ENCODE measurements at regions of chr17 and their contacts with region 1.

Region 1: DNA sequence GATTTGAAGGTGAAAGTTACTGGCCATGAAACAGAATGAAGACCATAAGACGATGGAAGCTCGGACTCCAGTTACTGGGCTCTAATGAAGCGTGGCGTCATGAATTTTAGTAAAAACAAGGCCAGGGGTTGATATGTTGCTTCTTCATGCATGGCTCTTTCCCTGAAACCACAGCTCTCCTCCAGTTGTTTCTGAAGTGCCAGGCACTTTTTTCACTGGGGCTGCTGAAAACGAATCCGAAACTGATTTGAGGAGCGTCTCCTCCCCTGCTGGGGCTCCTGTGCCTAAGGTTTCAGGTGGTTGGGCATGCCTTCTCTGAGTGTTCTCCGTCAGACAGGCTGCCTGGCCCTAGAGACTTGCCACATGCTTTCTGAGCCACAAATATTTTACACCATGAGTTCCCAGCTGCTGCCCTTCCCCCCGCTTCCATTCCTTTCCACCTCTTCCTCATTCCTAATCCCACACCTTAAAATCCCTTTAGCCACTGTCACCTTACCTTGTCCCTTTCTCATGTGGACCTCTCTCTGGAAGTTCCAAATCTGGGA is 3.7 kb upstream of the MYL4 start:
- DNase-seq: peak; percentile 71
- H3K4me3 Mint-ChIP-seq: peak overlapping the region; percentile 75
- H3K27ac Mint-ChIP-seq: peak overlapping the region; percentile 84
- H3K4me1 Mint-ChIP-seq: peaks cover 45% of the 10 kb centered on the region
- H3K27me3 Mint-ChIP-seq: no peaks in the 10 kb centered on the region

Region 2: GRCh38 chr17:47145351-47145750 is 60.1 kb before region 1 on chr17:
- intact Hi-C with region 1: no loop called
- DNase-seq: no peak
- H3K4me3 Mint-ChIP-seq: no peak overlapping the region
- H3K27ac Mint-ChIP-seq: no peak overlapping the region
- H3K4me1 Mint-ChIP-seq: no peaks in the 10 kb centered on the region
- H3K27me3 Mint-ChIP-seq: no peaks in the 10 kb centered on the region

Region 3: GRCh38 chr17:47162013-47162622 is 43.4 kb before region 1 on chr17:
- intact Hi-C with region 1: loop called (anchors 5 kb)
- DNase-seq: no peak
- H3K4me3 Mint-ChIP-seq: peak overlapping the region; percentile 24
- H3K27ac Mint-ChIP-seq: peak overlapping the region; percentile 13
- H3K4me1 Mint-ChIP-seq: peaks cover 26% of the 10 kb centered on the region
- H3K27me3 Mint-ChIP-seq: no peaks in the 10 kb centered on the region

Region 4: DNA sequence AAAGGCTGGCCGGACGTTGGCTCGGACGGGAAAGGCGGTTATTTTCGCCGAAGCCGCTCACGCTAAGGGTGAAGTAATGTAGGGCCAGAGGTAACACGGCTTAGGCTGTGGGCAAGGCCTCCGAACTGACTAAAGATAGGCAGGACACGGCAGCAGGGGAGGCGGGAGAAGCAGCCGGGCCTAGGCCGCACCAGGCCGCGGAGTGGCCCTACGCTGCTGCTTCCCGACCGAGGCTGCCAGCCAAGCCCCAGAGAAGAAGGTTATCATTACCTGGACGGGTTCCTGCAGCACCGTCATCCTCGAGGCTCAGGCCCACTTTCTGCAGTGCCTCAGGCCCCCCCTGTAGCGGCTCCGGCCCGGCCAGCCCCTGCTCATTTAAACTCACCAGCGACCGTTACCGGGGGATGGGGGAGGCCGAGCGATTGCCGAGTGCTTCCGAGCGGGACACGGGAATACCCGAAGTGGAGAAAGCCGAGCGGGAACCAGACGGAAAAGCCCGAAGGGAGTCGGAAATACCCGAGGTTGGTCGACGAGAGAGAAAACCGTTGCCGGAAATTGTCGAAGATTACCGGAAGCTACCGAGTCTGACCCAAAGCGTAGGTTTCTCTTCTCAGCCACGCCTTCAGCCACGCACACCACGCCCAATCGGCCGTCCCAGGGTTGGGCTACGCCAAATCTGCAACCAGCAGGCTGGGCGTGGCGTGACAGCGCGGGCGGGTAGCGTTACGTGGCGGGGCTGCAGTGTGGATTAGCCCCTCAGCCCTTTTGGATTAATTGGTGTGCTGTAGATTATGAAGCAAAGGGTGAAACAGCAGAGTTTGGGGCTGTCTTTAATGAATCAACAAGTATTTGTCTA is 16.4 kb before region 1 on chr17 and contains the start of gene CDC27:
- intact Hi-C with region 1: loop called (anchors 1 kb)
- DNase-seq: peak; percentile 100
- H3K4me3 Mint-ChIP-seq: peak within 1 kb of the TSS; percentile 98
- H3K27ac Mint-ChIP-seq: peak within 1 kb of the TSS; percentile 97
- H3K4me1 Mint-ChIP-seq: peaks cover 46% of the 10 kb centered on the region
- H3K27me3 Mint-ChIP-seq: peaks cover 2% of the 10 kb centered on the region
- total RNA-seq, gene CDC27: 89.7 and 92.0 TPM in 2 replicates

Region 5: GRCh38 chr17:47229535-47230443 is 24.3 kb after region 1 on chr17:
- intact Hi-C with region 1: loop called (anchors 1 kb)
- DNase-seq: peak; percentile 60
- H3K4me3 Mint-ChIP-seq: peak overlapping the region; percentile 47
- H3K27ac Mint-ChIP-seq: no peak overlapping the region
- H3K4me1 Mint-ChIP-seq: peaks cover 14% of the 10 kb centered on the region
- H3K27me3 Mint-ChIP-seq: peaks cover 10% of the 10 kb centered on the region

Region 6: GRCh38 chr17:47286198-47286914 is 80.9 kb after region 1 on chr17:
- intact Hi-C with region 1: no loop called
- DNase-seq: no peak
- H3K4me3 Mint-ChIP-seq: no peak overlapping the region
- H3K27ac Mint-ChIP-seq: no peak overlapping the region
- H3K4me1 Mint-ChIP-seq: peaks cover 7% of the 10 kb centered on the region
- H3K27me3 Mint-ChIP-seq: peaks cover 14% of the 10 kb centered on the region